ENCODE measurements at regions of chr7 and their contacts with region 1.

Region 1: GRCh38 chr7:116984917-116985316 is 31.6 kb downstream of the ST7 start:
- DNase-seq: peak; percentile 32
- CTCF ChIP-seq: peak; percentile 53

Region 2: DNA sequence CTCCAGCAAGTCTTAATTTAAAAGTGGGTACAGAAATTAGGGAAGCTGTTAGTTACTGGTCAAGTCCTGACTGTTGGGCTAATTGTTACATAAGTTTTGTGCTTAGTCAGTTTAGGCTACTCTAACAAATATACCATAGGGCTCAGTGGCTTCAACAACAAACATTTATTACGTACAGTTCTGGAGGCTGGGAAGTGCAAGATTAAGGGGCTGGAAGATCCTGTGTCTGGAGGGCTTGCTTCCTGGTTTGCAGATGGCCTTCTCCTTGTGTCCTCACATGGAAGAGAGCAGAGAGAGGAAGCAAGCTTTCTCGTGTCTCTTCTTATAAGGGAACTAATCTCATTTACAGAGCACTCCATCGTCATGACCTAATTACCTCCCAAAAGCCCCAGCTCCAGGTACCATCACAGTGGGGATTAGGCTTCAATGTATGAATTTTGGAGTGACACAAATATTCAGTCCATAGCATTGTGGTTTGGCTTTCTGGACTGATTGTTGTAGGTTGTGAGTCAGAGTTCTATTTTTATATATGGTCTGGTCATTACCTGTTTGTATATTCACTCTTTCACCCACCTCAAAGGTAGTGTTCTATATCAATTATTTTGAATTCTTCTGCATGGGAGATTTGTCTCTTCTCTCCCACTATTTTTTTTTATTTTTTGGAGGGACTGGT is 14.5 kb before region 1 on chr7:
- CTCF ChIA-PET with region 1: interaction called, 61 read pairs
- POLR2A ChIA-PET with region 1: interaction called, 3 read pairs
- DNase-seq: no peak
- CTCF ChIP-seq: no peak

Region 3: GRCh38 chr7:117008883-117009531 is 24.1 kb after region 1 on chr7:
- CTCF ChIA-PET with region 1: interaction called, 126 read pairs
- POLR2A ChIA-PET with region 1: no interaction called
- DNase-seq: no peak
- CTCF ChIP-seq: no peak

Region 4: GRCh38 chr7:117110480-117111337 is 125.8 kb after region 1 on chr7:
- CTCF ChIA-PET with region 1: interaction called, 274 read pairs
- POLR2A ChIA-PET with region 1: no interaction called
- DNase-seq: peak; percentile 64
- CTCF ChIP-seq: no peak

Region 5: DNA sequence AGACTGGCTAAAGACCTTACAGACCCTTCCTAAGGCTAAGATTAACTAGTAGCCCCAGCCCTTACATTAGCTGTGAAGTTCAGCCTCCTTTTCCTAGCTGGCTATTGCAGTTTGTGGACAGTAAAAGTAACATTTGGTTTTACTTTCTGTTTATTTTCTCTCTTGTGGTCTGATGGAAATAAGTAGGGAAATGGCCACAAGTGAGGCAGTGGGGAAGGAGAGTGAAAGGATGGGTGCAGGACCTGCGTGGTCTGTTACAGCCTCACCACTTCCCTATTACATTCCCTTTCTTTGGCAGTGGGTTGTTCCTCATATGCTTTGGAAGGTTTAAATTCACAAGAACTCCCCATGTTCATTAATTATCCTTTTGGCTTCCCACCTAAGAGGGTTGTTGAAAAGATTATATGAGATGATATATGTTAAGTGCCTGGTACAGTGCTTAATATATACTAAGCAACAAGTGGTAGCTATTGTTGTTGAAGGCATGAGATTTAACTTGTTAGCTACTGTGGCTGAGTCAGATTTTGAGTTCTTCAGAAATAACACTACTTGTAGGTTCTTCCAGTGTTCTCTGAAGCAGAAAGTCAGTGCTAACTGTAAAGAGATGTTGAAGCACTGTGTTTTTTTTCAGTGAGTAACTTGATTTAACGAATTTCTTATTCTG is 150.1 kb after region 1 on chr7:
- CTCF ChIA-PET with region 1: interaction called, 12 read pairs
- POLR2A ChIA-PET with region 1: no interaction called
- DNase-seq: no peak
- CTCF ChIP-seq: no peak

Measured in GM10248 (cell line).